ENCODE measurements at regions of chr1 and their contacts with region 1.

Region 1: DNA sequence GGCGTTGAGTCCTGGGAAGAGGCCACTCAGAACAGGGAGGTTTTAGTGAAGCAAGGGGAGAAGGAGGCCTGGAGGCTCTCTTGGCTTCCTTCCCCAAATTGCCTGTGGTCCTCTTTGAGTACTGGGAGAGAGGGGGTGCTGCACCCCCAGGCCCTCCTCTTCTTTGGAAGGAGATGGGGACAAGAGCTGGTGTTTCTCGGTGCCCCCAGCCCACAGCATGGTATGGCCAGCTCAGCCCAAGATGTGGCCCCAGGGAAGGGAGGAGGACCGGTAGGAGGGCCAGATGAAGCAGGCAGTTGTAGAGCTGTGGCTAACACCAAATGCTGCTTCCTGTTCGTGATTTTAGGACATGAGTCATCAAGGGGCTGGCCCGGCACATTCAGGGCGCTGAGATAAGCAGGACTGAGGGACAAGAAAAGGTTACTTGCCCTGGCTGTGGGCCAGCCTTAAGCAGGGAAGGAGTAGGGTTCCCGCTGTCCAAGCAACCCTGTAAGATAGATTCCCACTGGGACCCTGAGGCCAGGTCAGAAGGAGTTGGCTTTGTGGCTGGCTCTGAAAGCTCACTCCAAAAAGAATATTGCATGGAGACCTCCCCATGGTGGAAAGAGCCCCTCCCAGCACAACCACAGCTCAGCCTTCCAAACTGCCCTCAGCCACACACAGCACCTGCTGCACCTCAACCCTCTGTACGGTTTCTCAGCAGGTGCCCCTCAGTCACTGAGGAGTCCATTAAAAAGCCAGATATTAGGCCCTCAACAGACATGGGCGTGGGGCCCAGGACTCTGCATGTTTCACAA is 4.9 kb upstream of the TNFRSF1B start:
- DNase-seq: peak; percentile 84 to 89
- H3K4me3 ChIP-seq: no peak overlapping the region
- H3K27ac ChIP-seq: peak overlapping the region; percentile 47; the same call in 1 of the 2 replicates
- H3K4me1 ChIP-seq: peaks cover 59% of the 10 kb centered on the region
- H3K27me3 ChIP-seq: no peaks in the 10 kb centered on the region
- CTCF ChIP-seq: no peak

Region 2: DNA sequence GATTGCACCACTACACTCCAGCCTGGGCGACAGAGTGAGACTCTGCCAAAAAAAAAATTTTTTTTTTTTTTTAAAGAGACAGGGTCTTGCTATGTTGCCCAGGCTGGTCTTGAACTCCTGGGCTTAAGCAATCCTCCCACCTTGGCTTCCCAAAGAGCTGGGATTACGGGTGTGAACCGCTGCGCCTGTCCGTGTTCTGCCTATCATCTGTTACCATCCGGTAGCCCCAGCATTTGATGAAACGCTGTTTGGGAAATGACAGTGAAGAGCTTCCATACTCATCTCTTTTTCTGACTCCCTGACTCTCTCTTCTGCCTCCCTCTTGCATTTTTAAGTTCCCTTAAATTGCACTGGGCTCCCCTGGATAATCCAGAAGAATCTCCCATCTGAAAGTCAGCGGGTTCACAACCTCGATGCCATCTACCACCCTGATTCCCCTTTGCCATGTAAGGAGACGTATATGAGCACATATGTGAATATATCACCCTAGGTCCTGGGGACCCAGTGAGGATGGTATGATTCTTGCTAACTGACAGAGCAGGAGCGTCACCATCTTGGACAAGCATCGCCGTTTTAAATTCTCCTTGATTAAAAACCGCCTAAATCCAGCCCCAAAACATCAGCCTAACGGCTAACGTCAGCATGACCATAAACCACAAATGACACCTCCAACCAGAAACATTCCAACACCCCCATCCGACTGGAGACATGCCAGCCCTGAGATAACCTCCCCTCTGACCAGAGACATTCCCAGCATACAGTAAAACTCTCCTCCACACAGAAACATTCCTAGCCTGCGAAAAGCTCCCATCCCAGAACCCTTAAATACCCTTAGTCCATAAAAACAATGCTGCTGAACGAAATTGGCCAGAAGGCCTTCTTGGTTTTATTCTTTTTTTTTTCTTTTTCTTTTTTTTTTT is 86.4 kb before region 1 on chr1:
- CTCF ChIA-PET with region 1: no interaction called
- POLR2A ChIA-PET with region 1: interaction called, 17 read pairs
- intact Hi-C with region 1: no loop called
- DNase-seq: no peak
- H3K4me3 ChIP-seq: no peak overlapping the region
- H3K27ac ChIP-seq: no peak overlapping the region
- H3K4me1 ChIP-seq: no peaks in the 10 kb centered on the region
- H3K27me3 ChIP-seq: peaks cover 21% of the 10 kb centered on the region; the same call in 1 of the 2 replicates
- CTCF ChIP-seq: no peak

Region 3: GRCh38 chr1:12143631-12144155 is 18.2 kb before region 1 on chr1:
- CTCF ChIA-PET with region 1: no interaction called
- POLR2A ChIA-PET with region 1: interaction called, 10 read pairs
- intact Hi-C with region 1: loop called (anchors 1 kb)
- DNase-seq: peak; percentile 72 to 91
- H3K4me3 ChIP-seq: no peak overlapping the region
- H3K27ac ChIP-seq: peak overlapping the region; percentile 76
- H3K4me1 ChIP-seq: peaks cover 37% of the 10 kb centered on the region
- H3K27me3 ChIP-seq: no peaks in the 10 kb centered on the region
- CTCF ChIP-seq: no peak

Region 4: DNA sequence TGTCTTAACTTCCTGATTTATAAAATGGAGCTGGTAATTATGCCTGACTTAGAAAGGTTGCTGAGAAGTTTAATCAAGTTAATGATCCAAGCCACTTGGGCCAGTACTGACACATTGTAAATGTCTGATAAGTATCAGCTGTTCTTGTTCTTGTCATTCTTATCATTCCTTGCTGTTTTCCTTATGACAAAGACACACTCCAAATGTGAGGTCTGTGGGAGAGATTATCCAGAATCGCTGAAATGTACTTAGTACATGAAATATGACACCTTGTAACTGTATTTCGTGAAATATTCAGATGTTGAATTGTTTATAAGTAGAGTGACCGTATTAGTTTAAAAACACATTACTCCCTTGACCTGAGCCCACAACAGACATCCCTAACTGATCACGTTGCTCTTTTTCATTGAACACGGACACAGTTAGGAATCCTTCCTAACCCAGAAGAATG is 488.1 kb after region 1 on chr1:
- CTCF ChIA-PET with region 1: no interaction called
- POLR2A ChIA-PET with region 1: no interaction called
- intact Hi-C with region 1: no loop called
- DNase-seq: no peak
- H3K4me3 ChIP-seq: no peak overlapping the region
- H3K27ac ChIP-seq: no peak overlapping the region
- H3K4me1 ChIP-seq: no peaks in the 10 kb centered on the region
- H3K27me3 ChIP-seq: no peaks in the 10 kb centered on the region
- CTCF ChIP-seq: no peak